ENCODE measurements at regions of chr11 and their contacts with region 1.

Region 1: GRCh38 chr11:1202776-1203504 is 19.9 kb upstream of the MUC5B start:
- DNase-seq: peak; percentile 48 to 51
- H3K4me3 ChIP-seq: no peak overlapping the region
- H3K27ac ChIP-seq: no peak overlapping the region
- H3K4me1 ChIP-seq: no peaks in the 10 kb centered on the region
- H3K27me3 ChIP-seq: no peaks in the 10 kb centered on the region
- CTCF ChIP-seq: peak; percentile 62 to 97 (median 76)
- POLR2A ChIP-seq: no peak

Region 2: DNA sequence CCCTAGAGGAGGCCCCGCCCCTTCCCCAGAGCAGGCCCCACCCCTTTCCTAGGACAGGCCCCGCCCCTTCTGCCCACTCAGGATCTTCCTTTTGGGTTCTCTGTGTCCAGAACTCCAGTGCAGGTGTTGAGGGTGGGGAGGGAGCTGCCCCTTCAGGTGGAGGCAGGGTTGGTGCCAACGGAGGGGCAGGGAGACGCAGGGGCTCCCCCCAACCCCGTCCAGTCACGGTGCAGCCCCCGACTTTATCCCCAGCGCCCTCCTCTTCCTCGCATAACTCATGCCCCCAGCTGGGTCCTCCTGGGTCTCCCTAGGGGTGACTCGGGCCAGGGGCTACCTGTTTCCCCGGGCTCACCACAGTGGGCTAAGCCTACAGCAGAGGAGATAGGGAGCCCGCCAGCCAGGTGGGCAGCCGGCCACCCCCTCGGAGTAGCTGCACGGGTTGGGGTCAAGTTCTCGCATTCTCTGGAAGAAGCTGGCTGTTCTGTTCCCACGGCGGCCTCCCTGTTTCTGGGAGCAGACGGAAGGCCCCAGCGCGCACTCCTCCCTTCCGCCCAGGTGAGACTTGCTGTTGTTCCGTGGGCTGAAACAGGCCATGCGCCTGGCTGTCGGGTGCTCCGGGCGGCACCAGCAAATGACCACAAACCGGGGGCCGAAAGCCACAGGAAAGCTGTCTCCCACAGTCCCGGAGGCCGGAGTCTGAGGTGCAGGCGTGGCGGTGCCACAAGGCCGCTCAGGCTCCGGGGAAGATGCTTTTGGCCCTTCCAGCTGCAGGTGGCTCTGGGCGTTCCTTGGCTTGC is 89.3 kb before region 1 on chr11:
- intact Hi-C with region 1: no loop called
- DNase-seq: no peak
- H3K4me3 ChIP-seq: no peak overlapping the region
- H3K27ac ChIP-seq: no peak overlapping the region
- H3K4me1 ChIP-seq: no peaks in the 10 kb centered on the region
- H3K27me3 ChIP-seq: no peaks in the 10 kb centered on the region
- CTCF ChIP-seq: no peak
- POLR2A ChIP-seq: no peak

Region 3: GRCh38 chr11:1572197-1573076 is 369.5 kb after region 1 on chr11 and contains the start of gene DUSP8:
- intact Hi-C with region 1: loop called (anchors 5 kb)
- DNase-seq: peak; percentile 82 to 88
- H3K4me3 ChIP-seq: peak within 1 kb of the TSS in 1 of 3 donors; percentile 75
- H3K27ac ChIP-seq: peak within 1 kb of the TSS in 2 of 3 donors; percentile 64 to 85
- H3K4me1 ChIP-seq: peaks cover 15 to 33% of the 10 kb centered on the region in 2 donors
- H3K27me3 ChIP-seq: no peaks in the 10 kb centered on the region
- CTCF ChIP-seq: no peak
- POLR2A ChIP-seq: peak; percentile 14 to 76
- total RNA-seq, gene DUSP8: 1.3 to 3.5 (median 2.5) TPM

Measured in thyroid gland (tissue), 4 donors.